Activated B cell treated with CpG ODN at 0.5 μM for 24 hours (primary cell): ENCODE measurements at regions of chr13 and their contacts with region 1.

Region 1: GRCh38 chr13:48242677-48243076 is 9.7 kb downstream of the ITM2B start:
- DNase-seq: no peak
- ATAC-seq: no peak
- H3K4me3 Mint-ChIP-seq: no peak overlapping the region
- H3K27ac Mint-ChIP-seq: no peak overlapping the region
- H3K4me1 Mint-ChIP-seq: peaks cover 47% of the 10 kb centered on the region
- H3K27me3 Mint-ChIP-seq: no peaks in the 10 kb centered on the region
- CTCF ChIP-seq: no peak

Region 2: GRCh38 chr13:47168066-47168465 is 1074.6 kb before region 1 on chr13:
- CTCF ChIA-PET with region 1: no interaction called
- POLR2A ChIA-PET with region 1: no interaction called
- intact Hi-C with region 1: no loop called
- DNase-seq: no peak
- ATAC-seq: no peak
- H3K4me3 Mint-ChIP-seq: no peak overlapping the region
- H3K27ac Mint-ChIP-seq: no peak overlapping the region
- H3K4me1 Mint-ChIP-seq: no peaks in the 10 kb centered on the region
- H3K27me3 Mint-ChIP-seq: no peaks in the 10 kb centered on the region
- CTCF ChIP-seq: no peak

Region 3: DNA sequence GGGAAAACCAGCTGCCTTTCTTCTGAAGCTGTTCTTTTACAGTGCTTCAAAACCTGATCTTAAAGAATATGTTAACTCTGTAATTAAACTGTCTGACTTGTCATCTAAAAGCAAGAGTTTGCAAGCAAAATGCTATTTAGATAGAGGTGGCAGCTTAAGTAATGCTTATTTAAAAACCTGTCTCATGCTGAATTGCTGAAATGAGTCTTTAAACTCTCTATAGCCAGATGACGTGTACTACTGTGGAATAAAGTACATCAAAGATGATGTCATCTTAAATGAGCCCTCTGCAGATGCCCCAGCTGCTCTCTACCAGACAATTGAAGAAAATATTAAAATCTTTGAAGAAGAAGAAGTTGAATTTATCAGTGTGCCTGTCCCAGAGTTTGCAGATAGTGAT is 13.3 kb after region 1 on chr13:
- CTCF ChIA-PET with region 1: no interaction called
- POLR2A ChIA-PET with region 1: no interaction called
- intact Hi-C with region 1: loop called (anchors 2 kb)
- DNase-seq: no peak
- ATAC-seq: no peak
- H3K4me3 Mint-ChIP-seq: no peak overlapping the region
- H3K27ac Mint-ChIP-seq: no peak overlapping the region
- H3K4me1 Mint-ChIP-seq: peaks cover 6% of the 10 kb centered on the region
- H3K27me3 Mint-ChIP-seq: no peaks in the 10 kb centered on the region
- CTCF ChIP-seq: no peak